ENCODE measurements at regions of chr3 and their contacts with region 1.

Region 1: DNA sequence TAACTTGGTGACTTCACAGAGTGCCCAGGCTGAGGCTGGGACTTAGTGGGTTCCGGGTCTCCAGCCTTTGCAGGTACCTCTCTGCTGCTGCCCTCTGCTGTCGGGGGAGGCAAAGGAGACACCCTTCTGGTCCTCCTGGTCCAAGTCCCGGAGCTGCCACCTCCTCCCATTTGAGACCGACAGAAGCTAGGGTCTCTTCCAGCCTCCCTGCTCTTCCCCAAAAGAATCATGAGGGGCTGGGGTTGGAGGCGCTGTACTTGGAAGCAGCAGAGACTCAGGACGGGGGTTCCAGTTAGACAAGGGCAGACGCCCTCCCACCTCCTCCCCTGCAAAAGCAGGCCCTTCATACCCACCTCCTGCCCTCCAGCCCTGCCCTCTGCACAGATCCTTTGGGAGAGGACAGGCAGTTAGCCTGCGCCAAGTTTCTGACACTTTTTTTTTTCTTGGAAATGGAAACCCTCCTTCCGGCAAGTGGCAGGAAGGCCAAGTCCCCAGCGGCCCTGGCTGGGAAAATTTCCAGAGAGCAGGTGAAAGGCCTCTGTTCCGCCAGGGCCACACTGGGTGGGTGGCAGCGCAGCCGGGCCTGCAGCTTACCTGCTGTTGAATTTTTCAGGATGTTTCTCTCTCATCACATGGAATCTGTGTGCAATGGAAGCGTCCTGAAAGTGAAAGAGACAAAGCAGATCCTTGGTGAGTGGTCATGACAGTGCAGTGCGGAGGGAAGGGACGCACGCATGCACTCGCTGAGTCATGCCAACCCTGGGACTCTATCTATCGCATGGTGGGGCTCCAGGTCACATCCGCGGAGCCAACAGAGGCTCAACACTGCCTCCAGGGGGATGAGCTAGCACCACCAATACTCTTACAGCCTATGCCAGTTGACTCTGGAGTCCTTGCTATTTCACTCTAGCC is 119.9 kb downstream of the DGKG start:
- DNase-seq: peak; percentile 84
- ATAC-seq: peak; percentile 95

Region 2: DNA sequence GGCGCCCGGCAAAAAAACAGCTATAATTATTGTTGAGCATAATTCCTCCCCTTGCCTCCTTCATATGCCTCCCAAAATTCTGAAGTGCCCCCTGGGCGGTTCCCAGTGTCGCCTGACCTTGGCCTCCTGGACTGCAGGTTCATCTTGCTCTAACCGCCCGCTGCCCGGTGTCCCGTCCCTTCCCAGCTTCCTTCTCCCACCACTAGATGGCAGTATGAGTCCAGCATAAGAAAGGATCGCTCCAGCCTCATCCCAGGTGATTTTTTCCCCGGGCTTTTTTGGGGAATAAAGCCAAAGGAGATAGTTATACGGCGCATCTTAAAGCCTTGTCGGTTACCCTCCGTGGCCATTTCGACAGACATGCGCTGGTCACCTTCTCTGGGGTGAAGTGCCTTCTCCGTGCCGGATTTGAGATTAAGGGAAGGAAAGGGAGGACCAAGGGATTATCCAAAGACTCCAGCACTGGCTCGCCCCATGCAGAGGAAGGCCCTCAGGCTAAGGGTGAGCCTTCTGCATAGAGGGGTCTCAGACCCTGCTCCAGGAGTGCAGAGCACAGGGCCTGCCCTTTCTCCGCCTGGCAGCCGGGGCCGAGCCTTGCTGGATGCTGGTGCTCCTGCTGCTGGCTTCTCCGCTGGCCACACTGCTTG is 258.5 kb before region 1 on chr3:
- intact Hi-C with region 1: loop called (anchors 2 kb)
- DNase-seq: peak; percentile 68
- ATAC-seq: peak; percentile 97

Region 3: DNA sequence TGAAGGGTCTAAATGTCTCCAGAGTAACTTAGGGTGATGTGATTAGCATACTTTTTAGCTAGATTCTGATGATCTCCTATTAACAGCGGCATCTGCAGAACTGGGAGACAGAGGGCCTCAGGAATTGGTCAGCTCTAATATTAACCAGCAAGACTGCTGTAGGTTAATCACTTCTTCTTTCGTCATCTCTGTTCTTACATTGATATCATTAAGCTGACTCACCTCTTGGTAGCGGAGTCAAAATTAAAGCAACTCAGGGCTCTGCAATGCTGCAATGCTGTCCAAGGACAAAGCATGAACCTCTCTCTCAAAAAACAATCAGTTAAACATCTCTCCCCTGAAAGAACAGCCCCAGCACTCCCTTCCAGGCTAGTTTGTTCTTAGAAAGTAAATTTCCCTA is 246.8 kb before region 1 on chr3:
- intact Hi-C with region 1: no loop called
- DNase-seq: no peak
- ATAC-seq: no peak

Region 4: GRCh38 chr3:186413615-186414415 is 171.6 kb after region 1 on chr3:
- intact Hi-C with region 1: no loop called
- DNase-seq: peak; percentile 72
- ATAC-seq: peak; percentile 83

Measured in Right ventricle myocardium superior (tissue), 1 donor.